Upper lobe of right lung (tissue), 1 donor: ENCODE measurements at regions of chr5 and their contacts with region 1.

Region 1: GRCh38 chr5:150560401-150561193 is 52.7 kb downstream of the NDST1 start:
- DNase-seq: no peak
- ATAC-seq: peak; percentile 90
- H3K4me3 ChIP-seq: no peak overlapping the region
- H3K27ac ChIP-seq: no peak overlapping the region
- H3K4me1 ChIP-seq: peaks cover 3% of the 10 kb centered on the region
- H3K27me3 ChIP-seq: no peaks in the 10 kb centered on the region
- CTCF ChIP-seq: peak; percentile 95

Region 2: DNA sequence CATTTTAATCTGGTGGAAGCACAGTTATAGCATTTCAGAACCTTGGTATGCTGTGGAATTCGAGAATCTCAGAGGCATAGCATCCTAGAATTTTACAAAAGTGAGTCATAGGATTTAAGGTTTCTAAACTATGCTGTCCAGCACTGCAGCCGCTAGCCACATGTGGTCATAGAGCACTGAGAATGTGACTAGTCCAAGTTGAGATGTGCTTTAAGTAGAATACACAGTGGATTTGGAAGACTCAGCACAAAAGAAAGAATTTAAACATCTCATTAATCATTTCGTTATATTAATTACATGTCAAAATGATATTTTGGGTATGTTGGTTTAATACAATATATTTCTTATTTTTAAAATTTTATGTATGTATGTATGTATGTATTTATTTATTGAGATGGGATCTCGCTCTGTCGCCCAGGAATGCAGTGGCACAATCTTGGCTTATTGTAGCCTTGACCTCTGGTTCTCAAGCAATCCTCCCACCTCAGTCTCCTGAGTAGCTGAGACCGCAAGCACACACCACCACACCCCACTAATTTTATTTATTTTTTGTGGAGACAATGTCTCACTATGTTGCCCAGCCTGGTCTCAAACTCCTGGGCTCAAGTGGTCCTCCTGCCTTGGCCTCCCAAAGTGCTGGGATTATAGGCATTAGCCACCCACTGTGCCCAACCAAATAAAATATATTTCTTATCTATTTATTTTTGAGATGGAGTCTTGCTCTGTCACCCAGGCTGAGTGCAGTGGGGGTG is 90.7 kb before region 1 on chr5:
- intact Hi-C with region 1: no loop called
- DNase-seq: no peak
- ATAC-seq: peak; percentile 12
- H3K4me3 ChIP-seq: no peak overlapping the region
- H3K27ac ChIP-seq: no peak overlapping the region
- H3K4me1 ChIP-seq: peaks cover 14% of the 10 kb centered on the region
- H3K27me3 ChIP-seq: no peaks in the 10 kb centered on the region
- CTCF ChIP-seq: no peak

Region 3: GRCh38 chr5:150656191-150657132 is 95.9 kb after region 1 on chr5:
- intact Hi-C with region 1: loop called (anchors 5 kb)
- DNase-seq: peak; percentile 87
- ATAC-seq: peak; percentile 82
- H3K4me3 ChIP-seq: peak overlapping the region; percentile 55
- H3K27ac ChIP-seq: peak overlapping the region; percentile 70
- H3K4me1 ChIP-seq: peaks cover 25% of the 10 kb centered on the region
- H3K27me3 ChIP-seq: no peaks in the 10 kb centered on the region
- CTCF ChIP-seq: peak; percentile 62